ENCODE measurements at regions of chr2 and their contacts with region 1.

Region 1: GRCh38 chr2:219402665-219403515 is 15.2 kb upstream of the DNPEP start:
- DNase-seq: peak; percentile 64
- H3K4me3 ChIP-seq: no peak overlapping the region
- H3K27ac ChIP-seq: no peak overlapping the region
- H3K4me1 ChIP-seq: peaks cover 2% of the 10 kb centered on the region
- H3K27me3 ChIP-seq: peaks cover 0 to 1% of the 10 kb centered on the region in 2 experiments
- CTCF ChIP-seq: peak; percentile 90 to 91
- POLR2A ChIP-seq: no peak

Region 2: GRCh38 chr2:219388127-219388844 is 14.6 kb before region 1 on chr2:
- CTCF ChIA-PET with region 1: interaction called, 50 read pairs
- POLR2A ChIA-PET with region 1: no interaction called
- dilution Hi-C with region 1: no loop called
- intact Hi-C with region 1: no loop called
- DNase-seq: peak; percentile 96
- H3K4me3 ChIP-seq: peak overlapping the region in 2 of 3 experiments; percentile 46 to 55
- H3K27ac ChIP-seq: no peak overlapping the region
- H3K4me1 ChIP-seq: peaks cover 9% of the 10 kb centered on the region
- H3K27me3 ChIP-seq: peaks cover 2% of the 10 kb centered on the region in 2 experiments
- CTCF ChIP-seq: peak; percentile 47 to 56
- POLR2A ChIP-seq: no peak

Region 3: DNA sequence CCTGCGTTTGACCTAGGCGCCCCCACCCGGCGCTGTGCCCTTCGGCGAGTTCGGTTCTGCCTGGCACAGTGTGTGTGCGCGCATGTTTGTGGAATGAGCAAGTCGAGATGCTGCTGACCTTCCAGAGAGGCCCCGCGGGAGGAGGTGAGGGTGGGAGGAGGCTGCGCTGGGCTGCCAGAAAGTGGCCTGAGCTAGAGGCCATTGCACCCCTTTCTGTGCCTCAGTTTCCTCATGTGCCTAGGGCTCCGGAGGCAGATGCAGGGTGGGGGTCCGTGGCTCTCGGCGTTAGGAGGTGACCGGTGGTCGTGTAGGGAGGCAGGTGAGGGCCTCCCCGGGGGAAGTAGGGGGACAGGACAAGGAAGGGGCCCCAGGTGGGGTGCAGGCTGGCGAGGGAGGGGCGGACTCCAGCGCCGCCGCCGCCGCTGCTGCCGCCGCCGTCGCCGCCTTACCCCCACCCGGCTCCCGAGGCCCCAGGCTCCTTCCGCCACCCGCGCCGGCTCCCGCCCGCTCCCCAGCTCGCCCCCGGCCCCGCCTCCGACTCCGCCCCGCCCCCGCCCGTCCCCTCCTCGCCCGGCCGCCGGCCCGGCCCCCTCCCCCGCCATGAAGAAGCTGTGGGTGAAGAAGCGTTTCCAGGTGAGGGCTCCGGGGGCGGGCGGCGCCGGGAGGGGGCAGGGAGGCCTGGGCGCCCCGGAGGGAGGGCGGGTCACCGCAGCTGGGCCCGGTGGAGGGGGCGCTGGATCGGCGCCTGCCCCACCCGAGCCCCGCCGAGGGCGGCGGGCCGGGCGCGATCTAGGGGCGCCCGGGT is 38.8 kb after region 1 on chr2:
- CTCF ChIA-PET with region 1: interaction called, 12 read pairs
- POLR2A ChIA-PET with region 1: no interaction called
- dilution Hi-C with region 1: no loop called
- intact Hi-C with region 1: no loop called
- DNase-seq: no peak
- H3K4me3 ChIP-seq: peak overlapping the region in 1 of 3 experiments; percentile 41
- H3K27ac ChIP-seq: no peak overlapping the region
- H3K4me1 ChIP-seq: peaks cover 4% of the 10 kb centered on the region
- H3K27me3 ChIP-seq: peaks cover 18 to 31% of the 10 kb centered on the region in 2 experiments
- CTCF ChIP-seq: no peak
- POLR2A ChIP-seq: no peak

Region 4: DNA sequence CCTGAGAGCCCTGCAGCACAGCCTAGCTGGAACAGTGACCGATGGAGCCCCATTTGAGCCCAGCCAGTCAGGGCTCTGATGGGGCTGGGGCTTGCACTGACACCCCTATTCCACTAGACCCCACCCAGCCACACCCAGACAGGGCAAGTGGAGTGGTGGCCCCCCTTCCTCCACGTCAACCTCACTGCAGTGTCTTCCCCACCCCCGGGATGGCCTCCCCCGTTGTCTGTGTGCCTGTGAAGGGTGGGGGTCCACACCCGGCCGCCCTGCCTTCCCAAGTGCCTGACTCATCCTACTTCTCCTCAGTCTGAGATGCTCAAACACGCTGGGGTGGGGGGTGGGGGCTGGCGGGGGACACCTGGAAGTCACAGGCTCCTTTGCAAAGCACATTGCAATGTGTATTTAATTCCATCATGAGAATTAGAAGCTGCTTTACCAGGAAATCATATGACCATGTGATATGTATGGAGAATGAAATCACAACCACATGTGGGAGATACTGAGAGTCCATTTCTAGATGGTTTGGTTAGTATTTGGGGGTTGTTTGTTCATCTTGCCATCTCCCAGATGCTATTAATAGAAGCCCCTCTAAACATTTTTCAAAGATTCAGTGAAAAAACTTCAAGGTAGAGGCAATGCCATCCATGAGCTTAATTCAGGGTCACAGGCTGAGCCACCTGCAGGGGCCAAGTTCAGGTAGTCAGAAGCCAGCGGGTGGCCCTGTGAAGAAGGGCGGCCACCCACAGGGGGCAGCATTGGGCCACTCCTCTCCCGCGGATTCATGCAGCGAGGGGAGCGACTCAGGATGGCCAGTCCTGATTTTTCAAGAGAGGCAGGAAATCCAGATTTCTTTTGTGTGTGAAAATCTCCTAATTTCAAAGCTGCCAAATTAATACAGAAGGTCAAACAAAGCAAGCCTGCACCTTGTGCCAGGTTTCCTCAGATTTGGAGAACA is 73.1 kb after region 1 on chr2:
- CTCF ChIA-PET with region 1: interaction called, 17 read pairs
- POLR2A ChIA-PET with region 1: no interaction called
- dilution Hi-C with region 1: no loop called
- intact Hi-C with region 1: loop called (anchors 1 kb)
- DNase-seq: peak; percentile 45
- H3K4me3 ChIP-seq: no peak overlapping the region
- H3K27ac ChIP-seq: no peak overlapping the region
- H3K4me1 ChIP-seq: no peaks in the 10 kb centered on the region
- H3K27me3 ChIP-seq: peaks cover 0 to 2% of the 10 kb centered on the region in 2 experiments
- CTCF ChIP-seq: peak; percentile 80 to 91
- POLR2A ChIP-seq: no peak

Region 5: DNA sequence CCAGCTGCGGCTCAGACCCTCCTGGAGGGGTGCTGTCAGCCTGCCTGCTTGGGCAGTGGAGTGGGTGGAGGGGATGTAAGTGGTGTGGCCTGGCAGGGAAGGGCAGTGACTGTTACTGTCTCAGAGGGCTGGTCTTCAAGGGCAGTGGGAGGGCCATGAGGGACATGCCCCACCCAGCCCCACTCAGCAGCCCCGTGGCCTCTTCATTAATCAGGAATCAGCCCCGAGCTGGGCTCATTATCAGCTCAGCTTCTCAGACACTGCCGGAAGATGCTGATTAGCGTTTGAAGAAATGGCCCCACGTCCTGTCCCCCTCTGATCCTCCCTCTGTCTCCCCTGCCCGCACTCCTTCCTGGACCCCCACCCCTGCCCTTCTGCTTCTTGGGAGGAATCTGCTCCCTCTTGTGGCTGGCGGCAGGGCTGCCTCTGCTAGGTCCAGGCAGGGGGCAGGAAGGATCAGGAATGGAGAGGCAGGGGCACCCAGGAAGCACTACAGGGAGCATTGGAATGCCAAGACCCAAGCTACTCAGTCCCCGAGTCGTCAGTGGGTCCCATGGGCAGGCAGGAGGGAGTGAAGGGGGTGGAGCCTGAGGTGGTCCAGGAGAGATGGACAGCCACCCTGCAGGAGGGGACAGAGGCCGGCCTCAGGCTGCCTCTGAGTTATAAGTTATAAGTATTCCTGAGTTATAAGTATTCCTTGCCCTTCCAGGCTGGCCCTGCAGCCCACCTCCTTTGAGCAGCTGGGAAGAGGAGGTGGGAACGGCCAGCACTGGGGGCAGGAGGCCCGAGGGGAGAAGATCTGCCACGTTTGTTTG is 118.4 kb after region 1 on chr2:
- CTCF ChIA-PET with region 1: interaction called, 329 read pairs
- POLR2A ChIA-PET with region 1: no interaction called
- dilution Hi-C with region 1: no loop called
- intact Hi-C with region 1: no loop called
- DNase-seq: no peak
- H3K4me3 ChIP-seq: no peak overlapping the region
- H3K27ac ChIP-seq: no peak overlapping the region
- H3K4me1 ChIP-seq: no peaks in the 10 kb centered on the region
- H3K27me3 ChIP-seq: peaks cover 53 to 66% of the 10 kb centered on the region in 2 experiments
- CTCF ChIP-seq: peak; percentile 26 to 63
- POLR2A ChIP-seq: no peak

Region 6: DNA sequence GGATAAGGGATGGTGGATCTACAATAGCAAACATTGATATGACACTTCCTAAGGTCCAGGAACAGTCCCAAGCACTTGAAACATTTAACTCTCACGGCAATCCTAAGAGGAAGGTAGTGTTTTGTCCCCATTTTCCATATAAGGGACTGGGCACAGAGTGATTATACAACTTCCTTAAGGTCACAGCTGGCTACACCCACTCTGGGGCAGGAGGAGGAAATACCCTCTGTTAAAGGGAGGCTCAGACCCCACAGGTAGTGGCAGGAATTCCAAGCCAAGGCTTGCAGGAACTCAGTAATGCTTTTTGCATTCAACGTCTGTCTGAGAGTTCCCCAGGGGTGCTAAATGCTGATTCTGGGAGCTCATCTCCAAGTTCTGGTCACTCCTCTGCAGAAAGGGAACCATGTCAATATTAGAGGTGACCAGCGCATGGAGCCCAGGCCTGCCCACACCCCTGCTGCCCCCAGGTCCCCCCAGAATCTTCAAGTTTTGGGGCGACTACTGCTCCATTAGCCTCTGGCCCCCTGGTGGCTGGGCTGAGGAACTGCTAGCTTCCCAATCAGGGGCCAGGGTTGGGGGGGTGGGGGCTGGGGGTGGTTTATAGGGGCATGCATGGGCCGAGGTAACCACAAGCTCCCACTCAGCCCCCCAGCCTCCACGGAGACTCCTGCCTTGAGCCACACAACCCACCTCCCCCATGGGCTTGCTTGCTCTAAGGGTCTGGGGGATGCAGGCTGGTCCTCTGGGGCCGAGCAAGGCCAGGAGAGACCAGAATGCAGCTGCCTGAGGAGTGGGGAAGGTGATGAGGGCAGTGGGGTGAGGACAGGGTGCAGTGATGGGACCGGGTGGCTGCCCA is 157.4 kb after region 1 on chr2:
- CTCF ChIA-PET with region 1: interaction called, 11 read pairs
- POLR2A ChIA-PET with region 1: no interaction called
- dilution Hi-C with region 1: no loop called
- intact Hi-C with region 1: no loop called
- DNase-seq: no peak
- H3K4me3 ChIP-seq: no peak overlapping the region
- H3K27ac ChIP-seq: no peak overlapping the region
- H3K4me1 ChIP-seq: no peaks in the 10 kb centered on the region
- H3K27me3 ChIP-seq: peaks cover 0 to 3% of the 10 kb centered on the region in 2 experiments
- CTCF ChIP-seq: peak; percentile 37 to 70
- POLR2A ChIP-seq: no peak

Measured in endothelial cell of umbilical vein (primary cell).